ENCODE measurements at regions of chr11 and their contacts with region 1.

Region 1: GRCh38 chr11:5891216-5891800 is 1.7 kb upstream of the OR52E5 start:
- DNase-seq: no peak
- H3K4me3 Mint-ChIP-seq: no peak overlapping the region
- H3K27ac Mint-ChIP-seq: no peak overlapping the region
- H3K4me1 Mint-ChIP-seq: no peaks in the 10 kb centered on the region
- H3K27me3 Mint-ChIP-seq: peaks cover 4% of the 10 kb centered on the region

Region 2: GRCh38 chr11:5123802-5124521 is 767.3 kb before region 1 on chr11:
- CTCF ChIA-PET with region 1: interaction called, 4 read pairs
- intact Hi-C with region 1: loop called (anchors 1 kb)
- DNase-seq: peak; percentile 74
- H3K4me3 Mint-ChIP-seq: no peak overlapping the region
- H3K27ac Mint-ChIP-seq: no peak overlapping the region
- H3K4me1 Mint-ChIP-seq: no peaks in the 10 kb centered on the region
- H3K27me3 Mint-ChIP-seq: peaks cover 22% of the 10 kb centered on the region

Region 3: GRCh38 chr11:5476184-5476819 is 415.0 kb before region 1 on chr11:
- CTCF ChIA-PET with region 1: interaction called, 7 read pairs
- intact Hi-C with region 1: loop called (anchors 1 kb)
- DNase-seq: peak; percentile 64
- H3K4me3 Mint-ChIP-seq: no peak overlapping the region
- H3K27ac Mint-ChIP-seq: no peak overlapping the region
- H3K4me1 Mint-ChIP-seq: no peaks in the 10 kb centered on the region
- H3K27me3 Mint-ChIP-seq: peaks cover 11% of the 10 kb centered on the region

Region 4: DNA sequence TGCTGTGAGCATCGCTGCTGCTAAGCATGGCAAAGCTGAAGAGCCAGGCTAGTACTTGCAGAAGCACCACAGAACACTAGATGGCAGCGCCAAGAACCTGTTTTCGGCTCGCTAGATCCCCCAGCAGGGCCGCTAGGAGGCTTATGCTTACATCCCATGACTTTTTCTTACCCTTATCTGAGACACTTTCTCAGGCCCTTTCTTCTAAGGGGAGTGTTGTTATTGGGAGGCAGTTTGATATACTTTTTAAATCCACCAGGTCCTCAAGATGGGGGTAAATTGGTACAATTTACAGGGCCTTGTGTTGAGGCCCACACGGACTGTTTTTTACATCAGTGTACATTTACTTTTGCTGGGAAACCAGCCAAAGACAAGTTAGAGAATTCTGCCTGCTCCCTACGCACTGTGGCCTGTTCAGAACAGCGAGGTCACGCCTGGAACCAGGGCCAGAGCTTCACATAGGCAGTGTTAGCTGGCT is 290.9 kb before region 1 on chr11:
- CTCF ChIA-PET with region 1: no interaction called
- intact Hi-C with region 1: loop called (anchors 5 kb)
- DNase-seq: peak; percentile 79
- H3K4me3 Mint-ChIP-seq: no peak overlapping the region
- H3K27ac Mint-ChIP-seq: no peak overlapping the region
- H3K4me1 Mint-ChIP-seq: peaks cover 6% of the 10 kb centered on the region
- H3K27me3 Mint-ChIP-seq: no peaks in the 10 kb centered on the region

Region 5: DNA sequence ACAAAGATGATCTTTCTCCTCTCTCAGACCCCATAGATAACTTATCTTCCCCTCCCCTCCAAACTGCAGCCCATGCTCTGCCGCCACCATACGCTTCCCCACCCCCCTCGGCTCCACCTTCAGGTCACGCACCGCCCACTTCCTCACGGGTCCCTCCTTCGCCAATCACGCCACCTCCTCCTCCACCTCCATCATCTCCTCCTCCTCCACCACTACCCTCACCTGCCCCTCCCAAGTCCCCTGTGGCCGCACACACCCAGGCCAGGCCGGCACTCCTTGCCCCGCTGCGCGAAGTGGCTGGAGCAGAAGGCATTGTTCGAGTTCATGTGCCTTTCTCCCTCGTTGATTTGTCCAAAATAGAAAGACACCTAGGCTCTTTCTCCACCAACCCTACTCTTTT is 38.3 kb after region 1 on chr11:
- CTCF ChIA-PET with region 1: no interaction called
- intact Hi-C with region 1: no loop called
- DNase-seq: no peak
- H3K4me3 Mint-ChIP-seq: no peak overlapping the region
- H3K27ac Mint-ChIP-seq: no peak overlapping the region
- H3K4me1 Mint-ChIP-seq: no peaks in the 10 kb centered on the region
- H3K27me3 Mint-ChIP-seq: peaks cover 1% of the 10 kb centered on the region